SK-N-SH (cell line): ENCODE measurements at regions of chr1 and their contacts with region 1.

Region 1: GRCh38 chr1:116878804-116879477 is 30.8 kb upstream of the PTGFRN start:
- DNase-seq: peak; percentile 71
- H3K4me3 ChIP-seq: peak overlapping the region; percentile 41 to 56
- H3K27ac ChIP-seq: peak overlapping the region; percentile 80 to 99
- H3K4me1 ChIP-seq: peaks cover 14 to 22% of the 10 kb centered on the region in 2 experiments
- H3K27me3 ChIP-seq: no peaks in the 10 kb centered on the region
- CTCF ChIP-seq: no peak
- EP300 ChIP-seq: peak in 1 of 2 experiments; percentile 46; a peak in 1 of 4 replicates
- RAD21 ChIP-seq: peak; percentile 61

Region 2: DNA sequence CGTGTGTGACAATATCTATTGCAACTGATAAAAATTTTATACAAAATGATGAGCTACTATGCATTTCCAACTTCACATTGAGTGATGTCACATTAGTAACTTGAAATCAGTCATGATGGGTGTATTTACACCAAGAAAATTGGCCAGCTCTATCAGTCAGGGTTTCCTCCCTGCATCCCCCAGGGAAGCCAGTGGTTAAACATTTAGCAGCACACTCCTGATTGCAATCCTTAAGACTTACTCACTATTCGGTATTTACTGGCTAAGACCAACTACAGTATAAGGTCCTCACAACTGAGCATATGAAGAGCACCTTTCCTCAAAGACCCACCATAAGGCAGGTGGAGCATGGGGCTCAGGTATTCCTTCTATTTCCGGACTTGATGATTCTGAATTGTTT is 10.6 kb before region 1 on chr1:
- CTCF ChIA-PET with region 1: no interaction called
- POLR2A ChIA-PET with region 1: no interaction called
- DNase-seq: no peak
- H3K4me3 ChIP-seq: no peak overlapping the region
- H3K27ac ChIP-seq: no peak overlapping the region
- H3K4me1 ChIP-seq: no peaks in the 10 kb centered on the region
- H3K27me3 ChIP-seq: no peaks in the 10 kb centered on the region
- CTCF ChIP-seq: no peak
- EP300 ChIP-seq: no peak
- RAD21 ChIP-seq: no peak

Region 3: DNA sequence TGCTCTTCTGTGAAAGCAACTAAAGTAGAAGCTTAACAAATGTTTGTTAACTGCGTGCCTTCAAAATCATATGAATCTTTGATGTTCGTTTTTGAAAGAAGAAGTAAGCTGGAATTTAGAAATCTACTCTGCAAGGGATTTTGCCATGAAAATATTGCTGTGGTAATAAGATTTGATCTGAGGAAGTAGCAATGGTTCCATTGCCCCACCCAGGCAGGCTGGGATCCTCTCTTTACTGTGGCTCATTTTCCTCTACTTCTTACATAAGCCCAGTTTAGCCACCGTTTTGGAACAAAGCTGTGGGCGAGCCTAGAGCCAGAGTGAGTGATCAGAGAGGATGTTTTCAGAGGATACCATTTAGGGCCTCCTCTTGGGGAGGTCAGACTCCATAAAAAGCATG is 10.4 kb after region 1 on chr1:
- CTCF ChIA-PET with region 1: interaction called, 10 read pairs
- POLR2A ChIA-PET with region 1: no interaction called
- DNase-seq: no peak
- H3K4me3 ChIP-seq: no peak overlapping the region
- H3K27ac ChIP-seq: no peak overlapping the region
- H3K4me1 ChIP-seq: no peaks in the 10 kb centered on the region; a peak in 1 of 4 replicates
- H3K27me3 ChIP-seq: no peaks in the 10 kb centered on the region; the same call in 1 of the 2 replicates
- CTCF ChIP-seq: no peak
- EP300 ChIP-seq: no peak
- RAD21 ChIP-seq: no peak